ENCODE measurements at regions of chr1 and their contacts with region 1.

Region 1: DNA sequence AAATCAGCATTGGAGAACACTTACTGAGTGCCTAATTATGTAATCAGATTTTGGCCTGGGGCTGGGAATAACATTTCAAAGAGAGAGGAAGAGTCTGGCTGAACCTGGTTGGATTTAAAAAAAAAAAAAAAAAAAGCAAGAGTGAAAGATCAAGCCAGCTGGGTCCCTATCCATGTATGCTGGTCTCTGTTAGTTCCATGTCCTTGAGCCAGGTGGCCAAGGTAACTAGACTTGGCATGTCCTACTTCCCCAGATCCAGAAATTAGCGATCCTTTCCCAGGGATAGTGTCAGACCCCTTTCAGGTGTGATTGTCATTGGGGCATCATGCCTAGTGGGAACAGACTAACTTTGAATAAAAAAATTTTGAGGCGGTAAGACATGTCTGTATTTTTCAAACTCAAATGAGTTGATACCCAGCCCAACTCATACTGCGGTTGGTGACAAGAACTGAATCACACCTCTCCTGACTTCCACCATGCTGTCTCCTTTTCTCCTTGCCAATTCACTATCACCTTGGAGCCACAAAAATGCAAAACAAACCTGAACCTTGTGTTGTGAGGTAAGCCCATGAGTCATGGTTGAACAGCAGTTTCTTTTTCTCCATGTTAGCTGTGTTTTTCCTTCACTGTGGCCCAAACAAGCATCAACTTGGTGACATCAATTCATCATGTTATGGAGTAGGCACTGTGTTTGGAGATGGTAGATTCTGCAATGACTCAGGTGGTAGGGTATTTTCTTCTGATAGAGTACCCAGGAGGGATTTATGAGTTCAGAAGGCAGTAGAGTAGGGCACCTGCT is 24.5 kb upstream of the PPP2R5A start:
- DNase-seq: peak; percentile 100
- H3K4me3 ChIP-seq: no peak overlapping the region
- H3K27ac ChIP-seq: peak overlapping the region; percentile 84
- H3K4me1 ChIP-seq: peaks cover 16% of the 10 kb centered on the region
- H3K27me3 ChIP-seq: no peaks in the 10 kb centered on the region
- CTCF ChIP-seq: no peak

Region 2: DNA sequence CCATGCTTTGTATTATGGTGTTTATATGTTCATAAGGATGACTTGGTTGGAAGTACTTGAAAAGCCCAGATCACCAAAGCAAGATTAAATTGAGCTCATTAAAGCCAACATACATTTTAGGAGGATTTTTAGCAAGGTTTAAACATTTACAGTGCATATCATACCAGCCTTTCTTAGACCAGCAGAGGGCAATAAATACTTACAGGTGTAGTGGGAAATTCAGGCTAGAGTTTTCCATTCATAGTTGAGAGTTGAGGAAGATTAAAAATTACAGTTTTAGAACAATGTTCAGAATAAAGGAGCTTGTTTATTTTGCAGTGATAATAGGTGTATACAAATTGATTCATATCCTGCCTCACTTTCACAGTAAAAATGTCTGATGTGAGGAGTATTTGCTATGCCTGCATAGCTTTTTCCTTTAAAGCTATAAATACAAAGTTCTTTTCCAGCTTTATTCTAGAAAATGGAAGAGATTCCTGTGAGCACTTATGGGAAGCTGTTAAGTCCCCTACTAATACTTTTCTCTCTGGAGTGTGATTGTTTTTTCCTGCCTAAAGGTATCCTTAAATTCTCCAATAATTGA is 189.9 kb before region 1 on chr1:
- CTCF ChIA-PET with region 1: no interaction called
- dilution Hi-C with region 1: no loop called
- in situ Hi-C with region 1: no loop called
- intact Hi-C with region 1: loop called (anchors 1 kb)
- DNase-seq: peak; percentile 25
- H3K4me3 ChIP-seq: no peak overlapping the region
- H3K27ac ChIP-seq: no peak overlapping the region
- H3K4me1 ChIP-seq: no peaks in the 10 kb centered on the region
- H3K27me3 ChIP-seq: no peaks in the 10 kb centered on the region
- CTCF ChIP-seq: peak; percentile 62 to 76

Region 3: DNA sequence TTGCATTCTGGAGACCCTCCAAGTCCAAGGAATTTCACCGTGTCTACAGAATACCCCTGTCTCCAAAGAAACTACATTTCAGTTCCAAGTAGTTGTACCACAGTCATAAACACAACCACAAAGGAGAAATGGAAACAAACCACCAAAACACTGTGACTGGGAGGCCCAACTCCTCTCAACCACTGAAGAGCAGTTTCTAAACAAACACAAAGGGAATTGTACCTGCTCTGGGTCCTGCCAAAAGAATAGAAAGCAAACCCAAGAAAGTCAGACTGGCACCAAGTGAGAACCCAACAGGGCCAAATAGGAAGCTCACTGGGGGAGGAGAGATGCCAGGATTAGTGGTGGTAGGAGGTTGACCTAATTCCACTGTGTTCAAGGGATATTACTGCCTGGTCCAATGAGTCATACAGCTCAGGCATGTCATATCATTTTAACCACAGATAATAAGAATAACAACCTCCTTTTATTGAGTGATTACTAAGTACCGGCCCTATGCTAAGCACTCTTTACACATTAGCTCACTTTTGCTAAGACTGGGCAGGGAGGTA is 99.5 kb before region 1 on chr1:
- CTCF ChIA-PET with region 1: no interaction called
- dilution Hi-C with region 1: no loop called
- in situ Hi-C with region 1: no loop called
- intact Hi-C with region 1: loop called (anchors 2 kb)
- DNase-seq: peak; percentile 86
- H3K4me3 ChIP-seq: no peak overlapping the region
- H3K27ac ChIP-seq: no peak overlapping the region
- H3K4me1 ChIP-seq: peaks cover 31% of the 10 kb centered on the region
- H3K27me3 ChIP-seq: no peaks in the 10 kb centered on the region
- CTCF ChIP-seq: no peak

Region 4: GRCh38 chr1:212179394-212180076 is 81.2 kb before region 1 on chr1:
- CTCF ChIA-PET with region 1: no interaction called
- dilution Hi-C with region 1: no loop called
- in situ Hi-C with region 1: no loop called
- intact Hi-C with region 1: loop called (anchors 5 kb)
- DNase-seq: peak; percentile 98
- H3K4me3 ChIP-seq: no peak overlapping the region
- H3K27ac ChIP-seq: peak overlapping the region; percentile 86
- H3K4me1 ChIP-seq: peaks cover 19% of the 10 kb centered on the region
- H3K27me3 ChIP-seq: no peaks in the 10 kb centered on the region
- CTCF ChIP-seq: no peak

Region 5: DNA sequence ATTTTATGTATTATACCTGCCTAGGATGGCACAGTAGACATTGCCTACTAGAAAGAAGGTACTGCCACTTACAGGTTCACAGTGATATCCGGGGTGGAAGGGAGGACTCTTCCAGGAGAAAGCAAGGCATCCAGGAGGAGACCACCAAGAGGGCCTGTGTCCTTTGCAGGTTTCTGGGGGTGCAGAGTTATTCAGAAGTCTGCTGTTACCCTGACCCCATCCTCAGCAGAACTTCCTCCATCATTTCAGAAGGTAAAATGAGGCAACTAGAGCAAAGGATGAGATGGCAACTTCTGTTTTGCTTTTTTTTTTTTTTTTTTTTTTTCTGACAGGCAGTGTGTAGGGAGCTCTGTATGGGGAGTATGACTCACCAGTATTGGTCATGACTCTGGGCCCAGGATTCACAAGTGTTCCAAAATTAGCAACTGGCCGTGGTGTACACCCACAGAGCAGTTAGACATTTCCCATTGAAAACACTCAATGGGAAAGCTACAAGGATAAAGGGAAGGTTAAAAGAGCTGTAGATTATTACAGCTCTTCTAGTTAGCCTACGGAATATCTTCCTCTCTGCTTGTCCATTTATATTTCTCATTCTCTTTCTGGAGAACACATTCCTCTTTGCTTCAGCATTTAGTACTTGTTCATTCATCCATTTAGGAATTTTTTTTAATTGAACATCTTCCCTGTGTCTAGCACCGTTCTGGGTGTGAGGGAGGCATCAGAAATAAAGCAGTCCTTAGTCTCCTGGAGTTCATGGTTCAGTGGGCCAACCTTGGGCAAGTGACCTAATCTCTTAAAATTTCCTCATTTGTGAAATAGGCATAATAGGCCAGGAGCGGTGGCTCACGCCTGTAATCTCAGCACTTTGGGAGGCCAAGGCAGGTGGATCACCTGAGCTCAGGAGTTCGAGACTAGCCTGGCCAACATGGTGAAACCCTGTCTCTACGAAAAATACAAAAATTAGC is 26.0 kb before region 1 on chr1:
- CTCF ChIA-PET with region 1: no interaction called
- dilution Hi-C with region 1: no loop called
- in situ Hi-C with region 1: no loop called
- intact Hi-C with region 1: loop called (anchors 2 kb)
- DNase-seq: peak; percentile 95
- H3K4me3 ChIP-seq: no peak overlapping the region
- H3K27ac ChIP-seq: peak overlapping the region; percentile 39
- H3K4me1 ChIP-seq: peaks cover 22% of the 10 kb centered on the region
- H3K27me3 ChIP-seq: no peaks in the 10 kb centered on the region
- CTCF ChIP-seq: no peak

Region 6: GRCh38 chr1:212284744-212285684 is 24.3 kb after region 1 on chr1 and contains the start of gene PPP2R5A:
- CTCF ChIA-PET with region 1: interaction called, 4 read pairs
- dilution Hi-C with region 1: no loop called
- in situ Hi-C with region 1: no loop called
- intact Hi-C with region 1: loop called (anchors 1 kb)
- DNase-seq: peak; percentile 99
- H3K4me3 ChIP-seq: peak within 1 kb of the TSS; percentile 63 to 95 (median 92)
- H3K27ac ChIP-seq: peak within 1 kb of the TSS; percentile 92
- H3K4me1 ChIP-seq: peaks cover 22% of the 10 kb centered on the region
- H3K27me3 ChIP-seq: no peaks in the 10 kb centered on the region
- CTCF ChIP-seq: peak in 1 of 2 donors; percentile 28
- total RNA-seq, gene PPP2R5A: 17.3 to 19.0 TPM